ENCODE measurements at regions of chr16 and their contacts with region 1.

Region 1: DNA sequence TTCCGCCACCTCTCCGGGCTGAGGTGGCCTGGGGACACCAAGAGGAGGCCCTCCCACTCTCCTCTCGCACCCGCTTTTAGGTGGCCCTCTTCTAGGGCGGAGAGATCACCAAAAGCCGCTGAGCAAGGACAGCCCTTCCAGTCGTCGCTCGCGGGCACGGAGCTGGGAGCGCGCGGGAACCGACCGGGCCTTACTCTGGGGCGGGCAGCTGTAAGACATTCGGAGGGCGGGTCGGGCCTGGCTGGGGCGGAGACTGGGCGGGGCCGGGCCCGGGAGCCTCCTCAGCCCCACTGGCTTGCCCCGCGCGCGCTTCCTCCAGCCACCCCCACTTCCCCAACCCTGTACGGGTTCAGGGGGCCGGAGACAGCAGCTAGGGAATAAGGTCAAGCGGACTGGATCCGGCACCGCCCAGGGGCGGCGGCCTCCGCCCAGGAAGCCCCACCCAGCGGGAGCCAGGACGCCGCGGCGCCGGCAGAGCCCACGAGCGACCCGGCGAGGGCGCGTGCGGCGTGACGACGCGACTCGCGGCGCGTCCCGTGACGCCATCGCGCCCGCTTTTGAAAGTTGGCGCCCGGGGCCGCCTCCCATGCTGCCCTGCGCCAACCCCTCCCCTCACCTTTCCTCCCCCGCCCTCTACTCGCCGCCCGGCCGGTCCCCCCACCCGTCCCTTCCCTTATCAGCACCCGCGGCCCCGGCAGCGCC is 351 bp upstream of the CTCF start:
- DNase-seq: peak; percentile 97
- ATAC-seq: peak; percentile 92
- H3K4me3 ChIP-seq: peak overlapping the region; percentile 90 to 99 (median 95)
- H3K27ac ChIP-seq: peak overlapping the region; percentile 99
- H3K4me1 ChIP-seq: peaks cover 40% of the 10 kb centered on the region
- H3K27me3 ChIP-seq: no peaks in the 10 kb centered on the region; a peak in 1 of 5 replicates
- CTCF ChIP-seq: peak; percentile 13; the same call in 1 of the 2 replicates
- EP300 ChIP-seq: no peak; a peak in 2 of 4 replicates
- POLR2A ChIP-seq: peak; percentile 70 to 88
- RAD21 ChIP-seq: 0 out of 2 replicates have a peak, but pooled peaks have one; percentile 16

Region 2: DNA sequence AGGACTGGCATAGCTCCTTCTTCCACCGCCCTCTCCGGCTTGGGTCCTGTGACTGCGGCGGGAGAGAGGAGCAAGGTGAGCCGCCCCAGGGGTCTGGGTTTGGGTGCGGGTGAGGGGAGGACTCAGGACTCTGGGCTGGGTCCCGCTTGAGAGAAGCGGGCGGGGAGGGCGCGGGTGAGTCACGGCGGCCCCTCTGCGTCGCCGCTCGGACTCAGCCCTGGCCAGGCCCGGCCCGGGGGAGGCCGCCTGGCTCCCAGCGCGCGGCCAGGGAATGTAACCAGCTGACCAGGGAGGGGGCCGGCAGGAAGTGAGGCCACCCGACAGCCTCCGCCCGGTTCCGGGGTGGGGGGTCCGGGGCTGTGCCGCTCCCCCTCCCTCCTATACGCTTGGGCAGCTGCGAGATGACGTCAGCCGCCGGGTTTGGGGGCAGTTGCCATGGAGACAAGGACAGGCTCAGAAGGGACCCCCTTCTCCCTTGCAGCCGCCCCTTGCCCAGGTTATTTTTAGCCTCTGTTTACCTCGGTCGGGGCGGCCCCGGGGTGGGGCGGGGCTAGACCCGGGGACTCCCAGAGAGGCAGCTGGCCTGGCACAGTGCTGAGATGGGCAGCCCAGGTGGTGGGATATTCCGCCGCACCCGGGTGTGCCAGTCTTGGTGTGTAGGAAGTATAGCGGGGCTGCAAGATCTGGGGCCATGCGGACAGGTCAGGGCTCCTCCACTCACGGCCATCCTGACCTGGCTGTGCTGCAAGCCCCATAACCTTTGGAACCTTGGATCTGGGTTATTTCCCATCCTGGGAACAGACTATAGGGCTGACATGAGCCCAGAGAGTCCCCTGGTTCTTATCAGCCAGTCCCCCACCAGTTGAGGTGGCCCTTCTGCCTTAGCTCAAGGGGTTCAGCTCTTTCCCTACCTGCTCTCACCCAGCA is 31.7 kb before region 1 on chr16:
- CTCF ChIA-PET with region 1: no interaction called
- POLR2A ChIA-PET with region 1: interaction called, 19 read pairs
- in situ Hi-C with region 1: no loop called
- intact Hi-C with region 1: no loop called
- DNase-seq: no peak
- ATAC-seq: peak; percentile 8
- H3K4me3 ChIP-seq: peak overlapping the region; percentile 69 to 82 (median 74)
- H3K27ac ChIP-seq: no peak overlapping the region
- H3K4me1 ChIP-seq: peaks cover 64% of the 10 kb centered on the region
- H3K27me3 ChIP-seq: peaks cover 2 to 16% of the 10 kb centered on the region in 2 experiments; a peak in 3 of 5 replicates
- CTCF ChIP-seq: no peak
- EP300 ChIP-seq: no peak
- POLR2A ChIP-seq: 0 out of 4 replicates have a peak, but pooled peaks of 1 of the 2 experiments have one; percentile 25
- RAD21 ChIP-seq: no peak

Region 3: DNA sequence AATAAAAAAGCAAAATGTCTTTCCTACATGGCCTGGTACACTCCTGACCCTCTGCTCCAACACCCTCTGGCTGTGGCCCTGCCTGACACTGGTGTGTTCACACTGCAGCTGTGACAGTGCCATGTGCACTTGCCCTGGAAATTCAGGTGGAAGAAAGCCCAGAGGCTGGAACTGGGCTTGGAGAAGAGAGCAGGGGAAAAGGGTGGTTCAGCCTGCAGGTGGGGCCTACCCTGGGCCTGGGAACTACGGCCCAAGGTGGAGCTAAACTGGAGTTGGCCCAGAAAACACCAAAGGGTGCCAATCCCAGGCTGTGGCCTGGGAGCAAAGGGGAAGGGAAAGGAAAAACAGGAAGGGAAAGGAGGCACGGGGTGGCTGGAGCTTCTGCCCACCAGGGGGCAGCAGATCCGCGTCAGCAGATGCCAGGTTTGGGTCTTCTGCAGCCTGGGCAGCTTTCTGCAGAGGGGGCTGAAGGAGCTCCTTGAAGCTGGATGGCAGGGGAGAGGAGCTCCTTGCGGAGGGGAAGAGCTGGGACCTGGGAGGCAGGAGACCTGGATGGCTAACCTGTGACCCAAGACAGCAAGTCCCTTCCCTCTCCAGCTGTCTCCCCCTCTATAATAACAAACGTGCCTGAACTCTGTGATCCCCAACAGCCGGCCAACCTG is 15.1 kb before region 1 on chr16:
- CTCF ChIA-PET with region 1: interaction called, 14 read pairs
- POLR2A ChIA-PET with region 1: interaction called, 17 read pairs
- in situ Hi-C with region 1: no loop called
- intact Hi-C with region 1: loop called (anchors 1 kb)
- DNase-seq: peak; percentile 65
- ATAC-seq: peak; percentile 78
- H3K4me3 ChIP-seq: no peak overlapping the region
- H3K27ac ChIP-seq: peak overlapping the region; percentile 29
- H3K4me1 ChIP-seq: peaks cover 4% of the 10 kb centered on the region; the same call in 1 of the 2 replicates
- H3K27me3 ChIP-seq: no peaks in the 10 kb centered on the region
- CTCF ChIP-seq: peak; percentile 96
- EP300 ChIP-seq: no peak
- POLR2A ChIP-seq: no peak
- RAD21 ChIP-seq: peak; percentile 97

Region 4: DNA sequence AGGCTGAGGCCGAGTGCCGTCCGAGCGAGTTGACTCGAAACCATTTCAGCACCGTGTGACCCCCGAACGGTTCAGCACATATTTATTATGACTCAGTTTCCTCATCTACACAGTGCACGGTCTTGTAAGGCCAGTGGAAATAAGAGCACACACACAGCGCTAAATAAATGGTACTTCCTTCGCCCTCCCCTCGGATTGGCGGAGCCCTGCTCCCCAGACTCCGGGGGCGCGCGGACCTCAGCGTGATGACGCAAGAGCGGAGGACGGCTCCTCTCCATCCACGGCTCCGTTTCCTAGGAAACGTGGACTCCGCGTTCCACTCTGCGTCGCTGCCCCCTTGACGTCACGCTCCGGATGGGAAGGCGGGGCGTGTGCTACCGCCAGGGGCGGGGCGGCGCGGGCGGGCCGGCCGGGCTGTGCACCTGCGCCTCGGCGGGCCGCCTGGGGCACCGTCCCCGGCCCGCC is 98.6 kb after region 1 on chr16 and contains the start of gene PARD6A:
- CTCF ChIA-PET with region 1: no interaction called
- POLR2A ChIA-PET with region 1: interaction called, 28 read pairs
- in situ Hi-C with region 1: no loop called
- intact Hi-C with region 1: no loop called
- DNase-seq: peak; percentile 94
- ATAC-seq: peak; percentile 67
- H3K4me3 ChIP-seq: peak within 1 kb of the TSS; percentile 73 to 94 (median 93)
- H3K27ac ChIP-seq: peak within 1 kb of the TSS; percentile 87
- H3K4me1 ChIP-seq: peaks cover 21% of the 10 kb centered on the region
- H3K27me3 ChIP-seq: no peaks in the 10 kb centered on the region; a peak in 1 of 5 replicates
- CTCF ChIP-seq: peak; percentile 32; the same call in 1 of the 2 replicates
- EP300 ChIP-seq: no peak; a peak in 1 of 4 replicates
- POLR2A ChIP-seq: no peak
- RAD21 ChIP-seq: no peak
- total RNA-seq, gene PARD6A: 3.0 and 4.3 TPM in 2 replicates

Measured in HepG2 (cell line).